ENCODE measurements at regions of chr7 and their contacts with region 1.

Region 1: DNA sequence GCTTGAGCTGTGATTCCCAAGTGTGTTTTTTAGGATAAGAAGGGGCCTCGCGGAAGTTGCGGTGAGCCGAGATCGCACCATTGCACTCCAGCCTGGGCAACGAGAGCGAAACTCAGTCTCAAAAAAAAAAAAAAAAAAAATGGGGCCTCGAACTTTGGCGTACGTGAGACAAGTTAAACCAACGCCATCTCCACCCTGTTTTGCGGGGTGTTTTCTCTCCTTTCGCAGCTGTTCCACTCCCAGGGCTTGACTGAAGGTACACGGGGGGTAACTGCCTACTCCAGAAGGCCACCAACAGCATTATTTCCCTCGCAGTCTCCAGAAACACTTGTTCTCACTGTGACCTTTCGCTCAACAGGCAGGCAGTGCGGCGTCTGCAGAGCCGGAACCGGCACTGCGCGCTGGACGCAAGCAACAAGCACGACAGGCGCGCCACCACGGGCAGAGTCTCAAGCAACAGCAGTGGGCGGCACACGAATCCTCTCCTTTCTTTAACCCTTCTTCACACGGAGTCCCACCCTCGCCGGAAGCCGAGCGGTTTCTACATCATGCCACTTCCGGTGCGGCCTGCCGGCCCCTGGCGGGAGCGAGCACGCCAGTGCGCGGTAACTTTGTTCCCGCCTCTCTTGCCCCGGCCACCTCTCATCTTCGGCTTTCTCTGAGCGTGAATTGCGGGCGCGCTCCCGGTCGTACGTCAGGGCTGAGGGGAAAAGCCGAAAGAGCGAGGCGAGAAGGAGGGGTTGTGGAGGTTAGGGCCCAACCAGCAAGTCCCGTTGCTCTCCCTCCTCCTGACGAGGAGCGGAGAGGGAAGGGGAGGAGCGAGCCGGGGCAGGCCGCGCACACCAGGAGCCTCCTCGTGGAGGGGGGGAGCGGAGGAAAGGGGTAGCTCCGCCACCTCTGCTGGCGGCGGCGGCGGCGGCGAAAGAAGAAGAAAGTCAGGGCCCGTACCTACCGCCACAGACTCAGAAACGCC is 814 bp upstream of the CDK13 start:
- DNase-seq: peak; percentile 95 to 99 (median 98)
- H3K4me3 ChIP-seq: peak overlapping the region; percentile 65 to 98 (median 92)
- H3K27ac ChIP-seq: peak overlapping the region; percentile 91 to 100 (median 98)
- H3K27me3 ChIP-seq: no peaks in the 10 kb centered on the region
- CTCF ChIP-seq: peak in 37 of 56 donors; percentile 6 to 62 (median 33)

Region 2: DNA sequence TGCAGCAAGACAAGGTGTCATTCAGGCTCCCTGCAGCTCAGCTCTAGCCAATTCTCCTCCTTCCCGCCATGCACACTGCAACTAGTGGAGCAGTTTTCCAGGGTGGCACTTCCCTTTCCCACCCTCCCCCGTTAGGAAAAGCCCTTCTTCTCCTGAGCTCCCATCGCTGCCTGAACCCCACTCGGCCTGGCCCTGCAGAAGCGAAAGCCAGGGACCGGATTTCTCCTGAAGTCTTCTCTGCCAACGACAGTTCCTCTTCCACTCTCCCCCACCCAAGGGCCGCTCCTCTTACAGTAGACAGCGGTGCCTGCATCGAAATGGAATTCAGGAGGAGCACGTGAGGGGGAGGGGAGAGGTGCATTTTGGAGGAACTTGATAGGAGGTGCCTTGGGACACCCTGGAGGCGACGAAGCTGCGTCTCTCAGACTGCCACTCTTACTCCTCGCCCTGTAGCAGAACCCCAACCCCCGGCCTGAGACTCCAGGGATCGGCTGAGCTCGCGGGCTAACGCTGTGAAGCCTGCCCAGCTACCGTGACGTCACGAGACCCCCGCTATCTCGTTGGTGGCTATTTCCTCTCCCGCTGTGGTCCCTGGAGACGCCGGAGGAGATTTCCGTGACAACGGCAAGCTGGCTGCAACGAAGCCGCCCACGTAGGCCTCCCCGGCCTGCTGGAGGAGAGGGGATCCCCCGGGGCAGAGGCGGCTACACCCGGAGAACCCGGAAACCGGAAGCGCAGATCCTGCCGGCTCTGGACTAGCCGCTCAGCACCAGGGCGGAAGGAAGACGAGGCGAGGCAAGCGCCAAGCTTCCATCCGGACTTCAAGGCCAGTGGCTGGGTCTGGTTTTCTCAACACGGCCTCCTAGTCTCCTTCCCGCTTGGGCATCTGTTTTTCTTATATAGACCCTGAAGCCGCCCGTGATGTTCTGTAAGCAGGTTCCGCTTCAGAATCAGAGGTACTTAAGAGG is 216.1 kb before region 1 on chr7:
- intact Hi-C with region 1: loop called in 1 of 2 experiments (anchors 5 kb)
- DNase-seq: peak; percentile 93 to 98 (median 96)
- H3K4me3 ChIP-seq: peak overlapping the region; percentile 54 to 89 (median 73)
- H3K27ac ChIP-seq: peak overlapping the region in 58 of 59 donors; percentile 19 to 90 (median 74)
- H3K27me3 ChIP-seq: no peaks in the 10 kb centered on the region
- CTCF ChIP-seq: peak in 14 of 56 donors; percentile 6 to 52 (median 19)

Region 3: DNA sequence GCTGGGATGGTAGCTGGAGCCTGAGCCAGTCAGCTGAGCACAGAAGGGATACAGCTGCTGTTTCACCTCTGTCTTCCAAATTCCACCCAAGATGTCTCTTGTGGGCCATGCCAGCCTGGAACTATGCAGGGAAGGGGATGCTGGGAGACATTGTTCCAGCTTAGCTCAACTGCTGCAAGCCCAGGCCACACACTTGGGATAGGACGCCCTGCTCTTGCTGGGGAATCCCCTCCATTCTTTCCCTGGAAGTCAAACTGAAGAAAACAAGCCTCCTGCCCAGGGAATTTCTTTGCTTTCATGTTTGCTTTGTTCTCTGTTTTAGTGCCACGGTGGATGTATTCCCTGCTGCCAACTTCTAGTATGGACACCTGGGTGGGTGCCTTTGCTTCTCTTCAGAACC is 54.3 kb before region 1 on chr7:
- intact Hi-C with region 1: loop called in 1 of 2 experiments (anchors 2 kb)
- DNase-seq: no peak
- H3K4me3 ChIP-seq: no peak overlapping the region
- H3K27ac ChIP-seq: no peak overlapping the region
- H3K27me3 ChIP-seq: peaks cover 0 to 7% (median 0%) of the 10 kb centered on the region in 45 donors
- CTCF ChIP-seq: no peak

Region 4: DNA sequence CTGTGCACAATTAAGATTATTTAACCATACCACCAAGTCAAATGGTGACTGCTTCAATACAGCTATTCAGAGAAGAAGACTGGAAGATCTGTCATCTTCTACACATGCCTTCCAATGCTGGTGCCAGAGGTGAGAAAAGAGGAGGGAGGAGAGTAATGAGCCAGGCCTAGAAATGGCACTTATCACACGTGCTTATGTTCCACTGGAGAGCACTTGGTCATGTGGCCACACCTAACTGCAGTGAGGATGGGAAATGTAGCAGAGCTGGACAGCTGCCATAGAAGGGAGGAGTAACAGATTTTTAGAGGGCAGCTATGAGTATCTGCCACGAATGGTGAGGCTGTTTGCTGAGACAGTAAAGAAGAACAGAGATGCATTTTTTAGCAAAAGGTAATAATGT is 108.0 kb after region 1 on chr7:
- intact Hi-C with region 1: loop called (anchors 2 to 5 kb)
- DNase-seq: no peak
- H3K4me3 ChIP-seq: no peak overlapping the region
- H3K27ac ChIP-seq: no peak overlapping the region
- H3K27me3 ChIP-seq: no peaks in the 10 kb centered on the region
- CTCF ChIP-seq: no peak

Region 5: GRCh38 chr7:40134428-40135316 is 185.4 kb after region 1 on chr7 and contains the starts of genes MPLKIP and SUGCT:
- intact Hi-C with region 1: loop called (anchors 1 to 2 kb)
- DNase-seq: peak; percentile 67 to 91 (median 80)
- H3K4me3 ChIP-seq: peak within 1 kb of the TSS; percentile 73 to 99 (median 91)
- H3K27ac ChIP-seq: peak within 1 kb of the TSS; percentile 60 to 97 (median 92)
- H3K27me3 ChIP-seq: no peaks in the 10 kb centered on the region
- CTCF ChIP-seq: peak; percentile 77 to 99 (median 94)
- total RNA-seq, gene MPLKIP: 15.8 to 40.1 (median 27.3) TPM
- total RNA-seq, gene SUGCT: 1.4 to 11.5 (median 3.3) TPM